Ovary (tissue), 10 donors: ENCODE measurements at regions of chr17 and their contacts with region 1.

Region 1: DNA sequence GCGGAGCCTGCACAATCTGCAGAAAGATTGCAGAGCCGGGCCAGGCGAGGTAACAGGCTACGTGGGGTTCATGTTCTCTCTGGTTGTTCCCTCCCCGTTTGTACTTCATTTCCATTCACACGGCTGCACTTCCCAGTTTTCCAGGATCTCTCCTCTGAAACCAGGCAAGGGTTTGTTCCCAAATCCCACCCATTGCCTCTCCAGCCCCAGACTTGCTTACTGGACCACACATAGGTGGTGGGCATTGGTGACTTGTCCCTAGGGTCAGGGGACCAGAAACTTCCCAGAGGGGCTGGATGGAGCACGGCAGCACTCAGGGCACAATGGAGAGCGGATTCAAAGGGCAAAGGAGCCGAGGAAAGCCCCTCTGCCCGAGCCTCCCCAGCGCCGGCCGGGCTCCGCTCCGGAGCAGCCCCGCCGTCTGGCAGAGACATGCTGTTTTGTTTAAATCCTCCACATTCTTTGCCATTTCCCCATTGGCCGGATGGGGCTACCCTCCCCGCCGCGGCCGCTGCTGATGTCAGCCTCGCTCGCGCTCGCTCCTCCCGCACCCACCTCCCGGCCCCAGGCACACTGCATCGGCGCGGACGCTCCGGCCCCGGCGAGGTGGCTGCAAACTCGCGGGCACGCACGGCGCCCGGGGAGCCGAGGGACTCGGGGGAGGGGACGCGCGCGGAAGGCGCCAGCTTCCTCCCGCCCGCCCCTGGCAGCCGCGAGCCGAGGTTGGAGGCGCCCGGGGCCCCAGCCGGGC is at the start of gene PITPNC1:
- DNase-seq: peak; percentile 81 to 90 (median 86)
- H3K4me3 ChIP-seq: peak within 1 kb of the TSS; percentile 88
- H3K27ac ChIP-seq: peak within 1 kb of the TSS; percentile 82 to 86
- H3K4me1 ChIP-seq: peaks cover 5% of the 10 kb centered on the region
- H3K27me3 ChIP-seq: no peaks in the 10 kb centered on the region
- CTCF ChIP-seq: peak in 2 of 3 donors; percentile 25 to 37
- EP300 ChIP-seq: no peak
- POLR2A ChIP-seq: peak; percentile 69
- total RNA-seq, gene PITPNC1: 14.9 to 40.9 (median 23.8) TPM

Region 2: GRCh38 chr17:67441052-67441927 is 64.4 kb after region 1 on chr17:
- intact Hi-C with region 1: no loop called
- DNase-seq: no peak
- H3K4me3 ChIP-seq: no peak overlapping the region
- H3K27ac ChIP-seq: no peak overlapping the region
- H3K4me1 ChIP-seq: no peaks in the 10 kb centered on the region
- H3K27me3 ChIP-seq: no peaks in the 10 kb centered on the region
- CTCF ChIP-seq: no peak
- EP300 ChIP-seq: no peak
- POLR2A ChIP-seq: no peak

Region 3: GRCh38 chr17:67475236-67475937 is 98.5 kb after region 1 on chr17:
- intact Hi-C with region 1: loop called in 2 of 4 experiments (anchors 2 to 10 kb)
- DNase-seq: peak; percentile 37 to 77 (median 62)
- H3K4me3 ChIP-seq: no peak overlapping the region
- H3K27ac ChIP-seq: no peak overlapping the region
- H3K4me1 ChIP-seq: peaks cover 7% of the 10 kb centered on the region
- H3K27me3 ChIP-seq: no peaks in the 10 kb centered on the region
- CTCF ChIP-seq: peak; percentile 27 to 40 (median 30)
- EP300 ChIP-seq: no peak
- POLR2A ChIP-seq: no peak

Region 4: DNA sequence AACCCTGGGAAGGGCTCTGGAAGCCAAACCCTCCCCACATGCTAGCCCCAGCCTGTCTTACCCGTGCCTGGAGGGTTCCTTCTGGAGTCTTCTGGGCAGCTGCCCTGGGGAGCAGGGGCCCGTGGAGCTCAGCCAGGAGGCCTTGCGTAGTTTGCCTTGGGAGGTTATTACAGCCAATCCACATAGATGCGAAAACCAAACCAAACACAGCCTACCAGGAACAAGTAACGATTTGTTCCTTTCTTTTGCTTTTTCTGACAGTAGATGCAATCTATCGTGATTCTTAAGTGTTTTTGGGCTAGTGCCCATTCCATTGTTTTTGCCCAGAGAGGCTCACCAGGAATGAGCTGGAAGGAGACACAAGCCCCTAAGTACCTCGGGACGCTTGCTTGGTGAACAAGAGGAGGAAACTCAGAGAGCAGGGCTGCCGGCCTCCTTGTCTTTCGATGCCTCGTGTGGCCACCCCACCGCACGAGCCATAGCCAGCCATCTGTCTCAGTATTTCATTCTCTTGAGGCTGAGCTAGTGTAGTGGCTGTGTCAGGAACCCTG is 238.2 kb after region 1 on chr17:
- intact Hi-C with region 1: loop called in 2 of 4 experiments (anchors 5 to 10 kb)
- DNase-seq: no peak
- H3K4me3 ChIP-seq: no peak overlapping the region
- H3K27ac ChIP-seq: no peak overlapping the region
- H3K4me1 ChIP-seq: peaks cover 1% of the 10 kb centered on the region
- H3K27me3 ChIP-seq: no peaks in the 10 kb centered on the region
- CTCF ChIP-seq: no peak
- EP300 ChIP-seq: no peak
- POLR2A ChIP-seq: no peak

Region 5: GRCh38 chr17:67629971-67630320 is 253.0 kb after region 1 on chr17:
- intact Hi-C with region 1: loop called in 1 of 4 experiments (anchors 10 kb)
- DNase-seq: no peak
- H3K4me3 ChIP-seq: no peak overlapping the region
- H3K27ac ChIP-seq: no peak overlapping the region
- H3K4me1 ChIP-seq: no peaks in the 10 kb centered on the region
- H3K27me3 ChIP-seq: no peaks in the 10 kb centered on the region
- CTCF ChIP-seq: peak in 2 of 3 donors; percentile 25 to 44
- EP300 ChIP-seq: no peak
- POLR2A ChIP-seq: no peak

Region 6: DNA sequence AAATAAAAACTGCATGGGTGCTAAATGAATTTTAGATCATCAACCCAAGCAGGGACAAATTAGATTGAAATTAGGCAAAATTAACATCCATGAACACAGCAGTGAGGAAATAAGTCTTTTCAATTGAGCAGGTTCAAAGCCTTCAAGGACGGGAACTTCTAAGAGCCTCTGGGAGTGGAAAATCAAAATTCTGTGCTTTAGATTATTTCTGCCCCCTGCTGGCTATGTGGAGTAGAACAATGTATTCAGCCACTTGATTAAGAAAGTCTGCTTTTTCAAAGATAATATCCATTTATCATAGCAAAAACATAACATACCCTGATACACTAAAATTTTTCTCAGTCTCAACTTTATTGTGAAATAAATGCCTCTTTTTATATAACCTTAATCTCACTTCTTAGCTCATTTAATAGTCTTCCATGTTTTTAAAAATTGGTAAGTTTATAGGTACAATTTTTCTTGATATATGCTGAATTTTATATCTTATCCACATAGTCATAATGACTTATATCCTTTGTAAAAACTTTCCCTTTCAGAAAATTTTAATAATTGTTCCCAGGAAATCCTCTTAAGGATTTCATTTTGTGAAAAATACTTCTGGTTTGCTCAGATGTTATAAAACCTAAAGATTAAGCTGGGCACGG is 312.7 kb after region 1 on chr17:
- intact Hi-C with region 1: loop called (anchors 2 to 5 kb)
- DNase-seq: peak in 3 of 5 donors; percentile 18 to 71 (median 45)
- H3K4me3 ChIP-seq: no peak overlapping the region
- H3K27ac ChIP-seq: no peak overlapping the region
- H3K4me1 ChIP-seq: no peaks in the 10 kb centered on the region
- H3K27me3 ChIP-seq: no peaks in the 10 kb centered on the region
- CTCF ChIP-seq: peak; percentile 27 to 89 (median 79)
- EP300 ChIP-seq: no peak
- POLR2A ChIP-seq: no peak

Region 7: GRCh38 chr17:67717624-67718329 is 340.9 kb after region 1 on chr17 and contains the start of gene NOL11:
- intact Hi-C with region 1: no loop called
- DNase-seq: peak; percentile 98 to 100 (median 99)
- H3K4me3 ChIP-seq: peak within 1 kb of the TSS; percentile 67
- H3K27ac ChIP-seq: peak within 1 kb of the TSS; percentile 33 to 65
- H3K4me1 ChIP-seq: peaks cover 6% of the 10 kb centered on the region
- H3K27me3 ChIP-seq: no peaks in the 10 kb centered on the region
- CTCF ChIP-seq: peak; percentile 95 to 99 (median 97)
- EP300 ChIP-seq: no peak
- POLR2A ChIP-seq: peak; percentile 69
- total RNA-seq, gene NOL11: 22.2 to 56.3 (median 32.3) TPM

Region 8: DNA sequence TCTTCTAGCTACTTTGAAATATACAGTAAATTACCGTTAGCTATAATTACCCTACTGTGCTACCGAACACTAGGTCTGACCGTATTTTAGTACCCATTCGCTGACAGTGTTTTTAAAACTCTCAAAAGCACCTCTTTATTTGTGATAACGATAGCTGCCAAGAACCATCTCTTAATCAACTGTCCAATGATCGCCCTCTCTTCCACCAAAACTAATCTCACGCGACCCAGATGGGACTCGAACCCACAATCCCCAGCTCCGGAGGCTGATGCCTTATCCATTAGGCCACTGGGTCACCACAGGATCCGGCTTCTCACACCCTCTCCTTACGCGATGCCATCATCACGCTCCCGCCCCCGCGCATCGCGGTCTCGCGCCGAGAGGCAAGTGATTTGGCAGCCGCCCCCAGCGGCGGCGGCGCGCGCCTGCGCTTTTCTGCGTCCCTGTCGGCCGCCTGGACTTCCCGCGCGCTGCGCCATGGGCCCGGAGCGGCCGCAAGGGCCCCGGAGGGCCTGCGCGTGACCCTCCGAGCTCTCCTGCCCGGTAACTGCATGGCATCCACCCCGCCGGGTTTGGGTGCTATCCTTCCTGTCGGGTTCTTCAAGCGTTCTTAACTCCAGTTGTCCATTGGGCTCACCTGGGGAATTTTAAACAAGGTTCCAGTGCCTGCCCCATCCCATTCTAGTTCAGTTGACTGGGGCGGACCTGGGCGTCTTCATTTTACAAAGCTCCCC is 642.9 kb after region 1 on chr17:
- intact Hi-C with region 1: no loop called
- DNase-seq: peak; percentile 95 to 98 (median 97)
- H3K4me3 ChIP-seq: peak overlapping the region; percentile 63
- H3K27ac ChIP-seq: peak overlapping the region; percentile 71 to 84
- H3K4me1 ChIP-seq: no peaks in the 10 kb centered on the region
- H3K27me3 ChIP-seq: no peaks in the 10 kb centered on the region
- CTCF ChIP-seq: peak in 2 of 3 donors; percentile 68 to 83
- EP300 ChIP-seq: no peak
- POLR2A ChIP-seq: peak; percentile 14